GM12878 (cell line): ENCODE measurements at regions of chr19 and their contacts with region 1.

Region 1: DNA sequence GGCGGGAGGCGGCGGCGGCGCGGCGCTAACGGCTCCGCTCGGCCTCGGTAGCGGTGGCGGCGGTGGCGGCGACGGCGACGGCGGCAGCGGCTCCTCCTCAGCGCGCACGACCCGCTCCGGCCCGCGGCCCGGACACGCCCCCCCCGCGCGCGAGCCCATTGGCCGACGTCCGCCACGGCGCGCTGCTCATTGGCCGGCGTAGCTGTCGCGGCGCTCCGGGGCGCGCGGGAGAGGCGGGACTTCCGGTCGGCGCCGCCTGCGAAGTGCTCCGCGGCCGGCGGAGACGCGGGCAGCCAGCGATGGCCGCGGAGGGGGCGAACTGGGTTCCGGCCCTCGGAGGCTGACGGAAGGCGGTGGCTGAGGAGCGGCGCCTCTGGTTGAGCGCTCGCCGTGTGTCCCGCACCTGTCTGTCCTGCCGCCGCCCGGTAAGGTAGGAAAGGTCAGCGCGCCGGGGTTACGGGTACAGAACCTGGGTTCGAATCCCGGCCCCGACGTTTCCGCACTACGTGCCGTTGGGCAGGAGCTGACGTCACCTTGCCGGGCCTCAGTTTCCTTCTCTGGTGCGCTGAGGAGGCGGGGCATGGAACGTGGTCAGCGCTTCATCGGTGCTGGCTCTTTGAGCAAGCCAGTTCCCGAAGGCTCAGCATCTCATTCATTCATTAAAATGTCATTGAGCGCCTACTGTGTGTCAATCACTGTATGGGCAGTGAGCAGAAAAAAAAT is at the start of gene ELAVL1:
- DNase-seq: no peak
- ATAC-seq: peak; percentile 88
- H3K4me3 ChIP-seq: peak within 1 kb of the TSS; percentile 92
- H3K27ac ChIP-seq: peak within 1 kb of the TSS; percentile 79
- H3K4me1 ChIP-seq: peaks cover 19% of the 10 kb centered on the region
- H3K27me3 ChIP-seq: no peaks in the 10 kb centered on the region
- CTCF ChIP-seq: no peak
- EP300 ChIP-seq: no peak
- POLR2A ChIP-seq: peak; percentile 98
- RAD21 ChIP-seq: no peak
- polyA plus RNA-seq, gene ELAVL1: 7.4 to 12.9 TPM

Region 2: DNA sequence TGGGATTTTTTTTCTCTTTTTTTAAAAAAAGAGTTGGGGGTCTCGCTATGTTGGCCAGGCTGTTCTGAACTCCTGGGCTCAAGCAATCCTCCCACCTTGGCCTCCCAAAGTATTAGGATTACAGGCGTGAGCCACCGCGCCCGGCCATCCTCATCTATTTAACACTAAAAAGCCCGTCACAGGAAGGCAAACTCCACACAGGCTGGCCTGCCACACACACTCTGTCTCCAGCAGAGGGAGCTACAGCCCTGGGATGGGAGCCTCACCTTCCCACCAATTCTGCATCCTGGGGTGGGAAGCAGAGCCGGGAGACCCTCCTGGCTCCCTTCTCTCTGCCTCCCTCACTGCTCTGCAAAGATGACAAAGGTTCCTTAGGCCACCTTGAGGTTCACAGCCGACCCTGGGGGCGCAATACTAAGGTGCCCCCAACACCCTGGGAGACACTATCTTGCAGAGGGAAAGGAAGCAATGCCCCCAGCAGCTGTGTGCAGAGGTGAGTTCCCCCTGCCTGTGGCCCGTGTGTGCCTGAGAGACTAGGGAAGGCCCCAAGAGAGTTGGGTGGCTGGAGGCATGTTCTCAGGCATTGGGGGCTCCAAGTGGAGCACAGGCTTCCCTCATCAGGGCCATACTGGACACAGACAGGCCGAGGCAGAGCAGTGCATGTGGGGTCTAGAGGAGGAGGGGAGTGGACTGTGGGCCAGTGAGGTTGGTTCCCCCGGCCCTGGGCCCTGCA is 34.8 kb before region 1 on chr19:
- CTCF ChIA-PET with region 1: interaction called, 10 read pairs
- POLR2A ChIA-PET with region 1: no interaction called
- RAD21 ChIA-PET with region 1: no interaction called
- SMC1A ChIA-PET with region 1: interaction called, 4 read pairs
- in situ Hi-C with region 1: no loop called
- intact Hi-C with region 1: no loop called
- DNase-seq: no peak
- ATAC-seq: peak; percentile 76
- H3K4me3 ChIP-seq: no peak overlapping the region
- H3K27ac ChIP-seq: no peak overlapping the region
- H3K4me1 ChIP-seq: no peaks in the 10 kb centered on the region
- H3K27me3 ChIP-seq: no peaks in the 10 kb centered on the region
- CTCF ChIP-seq: peak; percentile 70 to 83 (median 73)
- EP300 ChIP-seq: no peak
- POLR2A ChIP-seq: no peak; the same call in 1 of the 2 replicates
- RAD21 ChIP-seq: peak; percentile 69

Region 3: GRCh38 chr19:8017808-8018207 is 12.1 kb after region 1 on chr19:
- CTCF ChIA-PET with region 1: interaction called, 11 read pairs
- POLR2A ChIA-PET with region 1: interaction called, 3 read pairs
- RAD21 ChIA-PET with region 1: no interaction called
- SMC1A ChIA-PET with region 1: no interaction called
- in situ Hi-C with region 1: no loop called
- intact Hi-C with region 1: no loop called
- DNase-seq: no peak
- ATAC-seq: peak; percentile 98
- H3K4me3 ChIP-seq: no peak overlapping the region
- H3K27ac ChIP-seq: no peak overlapping the region
- H3K4me1 ChIP-seq: no peaks in the 10 kb centered on the region; the same call in 1 of the 2 replicates
- H3K27me3 ChIP-seq: no peaks in the 10 kb centered on the region
- CTCF ChIP-seq: peak; percentile 68 to 82 (median 73)
- EP300 ChIP-seq: no peak
- POLR2A ChIP-seq: no peak
- RAD21 ChIP-seq: peak; percentile 76

Region 4: DNA sequence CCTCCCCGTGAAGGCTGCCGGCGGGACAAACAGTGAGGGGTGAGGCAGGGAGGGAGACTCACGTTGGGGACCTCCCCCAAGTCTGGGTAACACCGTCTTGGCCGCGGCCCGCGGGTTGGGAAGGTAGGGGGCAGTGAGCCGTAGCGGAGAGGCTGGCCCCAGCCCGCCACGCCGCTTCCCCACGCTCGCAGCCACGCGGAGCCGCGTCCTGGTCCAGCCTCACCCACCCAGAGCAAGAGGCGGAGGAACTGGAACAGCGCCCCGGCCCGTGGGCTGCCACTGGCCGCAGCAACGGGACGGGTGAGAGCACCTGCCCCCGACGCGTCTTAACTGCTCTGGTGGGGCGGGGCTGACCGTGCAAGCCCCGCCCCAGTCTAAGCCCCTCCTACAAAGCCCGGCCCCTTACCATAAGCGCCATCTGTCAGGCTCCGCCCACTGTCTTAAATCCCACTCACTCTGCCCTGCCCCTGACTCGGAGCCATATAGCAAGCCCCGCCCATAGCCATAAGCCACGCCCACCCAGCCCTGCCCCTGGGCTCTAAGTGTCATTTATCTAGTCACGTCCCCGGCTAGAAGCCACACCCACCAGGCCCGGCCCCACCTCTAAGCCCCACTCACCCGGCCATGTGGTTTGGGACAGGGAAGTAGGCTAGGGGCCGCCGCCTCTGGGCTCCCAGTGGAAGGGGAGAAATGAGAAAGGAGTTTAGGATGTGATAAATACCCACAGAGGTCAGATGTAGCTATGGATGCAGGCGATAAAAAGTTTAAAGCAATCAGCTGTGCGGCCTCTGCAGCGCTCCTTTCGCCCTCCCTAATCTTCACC is 44.8 kb after region 1 on chr19:
- CTCF ChIA-PET with region 1: interaction called, 4 read pairs
- POLR2A ChIA-PET with region 1: no interaction called
- RAD21 ChIA-PET with region 1: no interaction called
- SMC1A ChIA-PET with region 1: no interaction called
- in situ Hi-C with region 1: no loop called
- intact Hi-C with region 1: loop called (anchors 5 kb)
- DNase-seq: peak; percentile 91
- ATAC-seq: peak; percentile 94
- H3K4me3 ChIP-seq: peak overlapping the region; percentile 66
- H3K27ac ChIP-seq: peak overlapping the region; percentile 59
- H3K4me1 ChIP-seq: peaks cover 18% of the 10 kb centered on the region
- H3K27me3 ChIP-seq: no peaks in the 10 kb centered on the region
- CTCF ChIP-seq: no peak
- EP300 ChIP-seq: no peak
- POLR2A ChIP-seq: peak; percentile 94
- RAD21 ChIP-seq: no peak

Region 5: DNA sequence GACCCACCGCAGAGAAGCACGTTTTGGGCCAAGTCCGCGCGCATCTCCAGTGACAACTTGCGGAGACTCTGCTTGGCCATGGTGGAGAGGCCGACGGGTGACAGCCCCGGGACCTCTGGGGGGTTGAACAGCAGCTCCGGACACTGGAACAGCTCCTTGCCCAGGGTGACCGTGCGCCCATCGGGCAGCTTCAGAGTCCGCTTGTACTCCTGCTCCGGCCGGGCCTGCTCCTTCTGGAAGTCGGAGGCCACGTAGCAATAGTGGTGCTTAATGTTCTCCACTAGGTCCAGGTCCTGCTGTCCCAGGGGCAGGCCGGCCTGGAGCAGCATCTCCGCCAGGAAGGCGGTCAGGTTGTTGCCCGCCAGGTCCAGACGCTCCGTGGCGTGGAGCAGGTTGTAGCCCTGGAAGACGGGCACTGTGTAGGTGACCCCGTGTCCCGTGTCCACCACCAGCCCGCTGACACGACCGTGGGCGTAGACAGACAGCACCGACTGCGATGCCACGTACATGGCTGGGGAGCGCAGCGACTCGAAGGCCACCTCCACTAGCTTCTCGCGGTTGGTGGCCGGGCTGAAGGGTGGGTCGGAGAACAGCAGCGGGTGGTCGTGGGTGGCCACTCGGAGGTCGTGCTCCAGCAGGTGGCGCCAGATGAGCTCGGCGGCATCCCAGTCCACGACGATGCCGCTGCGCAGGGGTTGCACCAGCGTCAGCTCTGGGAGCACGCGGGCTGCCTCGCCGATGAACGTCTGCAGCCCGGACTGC is 692.2 kb after region 1 on chr19:
- CTCF ChIA-PET with region 1: no interaction called
- POLR2A ChIA-PET with region 1: no interaction called
- RAD21 ChIA-PET with region 1: no interaction called
- SMC1A ChIA-PET with region 1: no interaction called
- in situ Hi-C with region 1: no loop called
- intact Hi-C with region 1: no loop called
- DNase-seq: no peak
- ATAC-seq: no peak
- H3K4me3 ChIP-seq: no peak overlapping the region
- H3K27ac ChIP-seq: no peak overlapping the region
- H3K4me1 ChIP-seq: no peaks in the 10 kb centered on the region
- H3K27me3 ChIP-seq: no peaks in the 10 kb centered on the region
- CTCF ChIP-seq: no peak
- EP300 ChIP-seq: no peak
- POLR2A ChIP-seq: no peak
- RAD21 ChIP-seq: no peak